Activated CD4-positive, alpha-beta T cell treated with anti-CD3 and anti-CD28 coated beads, Interleukin-2, amount 10 ng/mL, durations not matched to agents 7 days and 5 days (primary cell): ENCODE measurements at regions of chr20 and their contacts with region 1.

Region 1: GRCh38 chr20:44115762-44116644 is 71.0 kb downstream of the JPH2 start:
- DNase-seq: no peak
- H3K4me3 Mint-ChIP-seq: no peak overlapping the region
- H3K27ac Mint-ChIP-seq: no peak overlapping the region
- H3K4me1 Mint-ChIP-seq: peaks cover 9% of the 10 kb centered on the region
- H3K27me3 Mint-ChIP-seq: peaks cover 24% of the 10 kb centered on the region

Region 2: GRCh38 chr20:43878776-43879175 is 237.2 kb before region 1 on chr20:
- CTCF ChIA-PET with region 1: no interaction called
- POLR2A ChIA-PET with region 1: no interaction called
- DNase-seq: no peak
- H3K4me3 Mint-ChIP-seq: no peak overlapping the region
- H3K27ac Mint-ChIP-seq: no peak overlapping the region
- H3K4me1 Mint-ChIP-seq: peaks cover 1% of the 10 kb centered on the region
- H3K27me3 Mint-ChIP-seq: peaks cover 33% of the 10 kb centered on the region

Region 3: DNA sequence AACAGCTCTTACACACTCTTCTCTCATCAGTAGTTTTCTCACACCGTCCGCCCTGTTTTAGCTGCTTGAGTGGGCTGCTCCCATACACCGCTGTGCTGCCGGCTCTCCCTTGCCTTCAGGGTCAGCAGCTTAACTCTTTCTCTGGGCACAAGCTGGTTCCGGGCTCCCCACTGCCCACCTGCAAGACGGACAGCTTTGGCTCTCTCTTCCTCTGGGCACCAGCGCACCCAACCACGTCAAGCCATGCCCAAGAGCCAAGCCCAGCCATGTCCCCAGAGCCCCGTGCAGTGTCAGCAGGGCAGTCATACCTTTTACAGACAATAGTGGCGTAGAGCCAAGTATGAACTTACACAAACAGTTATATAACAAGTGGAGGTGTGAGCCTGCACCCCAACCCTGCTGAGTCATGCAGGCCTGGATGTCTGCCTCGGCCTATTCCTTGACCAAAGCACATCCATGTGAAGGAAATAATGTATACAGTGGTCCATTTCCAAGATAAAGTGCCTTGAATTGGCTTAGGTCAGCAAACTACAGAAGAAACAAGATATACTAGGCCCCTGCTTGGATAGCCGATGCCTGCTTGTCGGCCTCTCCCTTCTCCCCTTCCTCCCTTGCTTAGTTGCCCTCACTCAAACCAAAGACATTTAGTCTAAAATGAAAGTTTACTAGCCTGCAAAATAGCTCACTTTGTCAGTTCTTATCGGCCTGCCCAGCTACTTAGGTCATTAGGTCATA is 18.3 kb before region 1 on chr20:
- CTCF ChIA-PET with region 1: no interaction called
- POLR2A ChIA-PET with region 1: no interaction called
- DNase-seq: no peak
- H3K4me3 Mint-ChIP-seq: no peak overlapping the region
- H3K27ac Mint-ChIP-seq: no peak overlapping the region
- H3K4me1 Mint-ChIP-seq: peaks cover 3% of the 10 kb centered on the region
- H3K27me3 Mint-ChIP-seq: peaks cover 29% of the 10 kb centered on the region

Region 4: DNA sequence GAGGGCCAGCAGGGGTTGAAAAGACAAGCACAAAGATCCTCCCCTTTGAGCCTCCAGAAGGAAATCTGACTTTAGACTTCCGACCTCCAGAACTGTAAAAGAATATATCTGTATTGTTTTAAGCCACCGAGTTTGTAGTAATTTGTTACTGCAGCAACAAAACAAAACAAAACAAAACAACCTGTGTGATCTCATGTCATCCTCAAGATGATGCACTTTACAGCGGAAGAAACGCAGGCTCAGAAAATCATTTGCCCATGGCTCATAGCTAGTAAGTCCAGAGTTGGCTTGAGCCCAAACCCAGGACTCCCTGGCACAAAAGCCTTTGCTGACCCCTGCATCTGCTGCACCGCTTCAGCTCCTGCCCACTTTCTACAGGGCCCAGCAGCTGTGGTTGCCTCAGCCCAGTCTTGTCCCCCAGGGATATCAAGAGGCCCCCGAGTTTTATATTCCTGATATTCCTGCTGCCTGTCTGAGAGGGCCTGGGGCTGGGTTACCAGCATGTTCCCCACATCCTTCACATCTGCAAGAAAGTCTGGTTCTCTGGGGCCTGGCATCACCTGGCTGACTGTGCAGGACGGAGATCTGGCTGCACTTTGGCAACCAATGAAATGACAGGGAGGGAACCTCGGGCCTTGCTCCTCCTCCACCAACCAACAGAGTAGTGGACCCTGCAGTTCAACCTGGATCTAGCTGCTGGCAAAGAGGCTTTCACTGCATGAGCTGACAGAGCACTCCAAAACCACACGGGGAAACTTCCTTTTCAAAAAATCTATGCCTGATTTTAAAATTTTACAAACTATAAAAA is 14.1 kb after region 1 on chr20:
- CTCF ChIA-PET with region 1: interaction called, 12 read pairs
- POLR2A ChIA-PET with region 1: no interaction called
- DNase-seq: no peak
- H3K4me3 Mint-ChIP-seq: no peak overlapping the region
- H3K27ac Mint-ChIP-seq: no peak overlapping the region
- H3K4me1 Mint-ChIP-seq: no peaks in the 10 kb centered on the region
- H3K27me3 Mint-ChIP-seq: peaks cover 8% of the 10 kb centered on the region

Region 5: GRCh38 chr20:44187051-44187762 is 71.2 kb after region 1 on chr20 and contains the start of gene JPH2:
- CTCF ChIA-PET with region 1: interaction called, 33 read pairs
- POLR2A ChIA-PET with region 1: no interaction called
- DNase-seq: no peak
- H3K4me3 Mint-ChIP-seq: no peak within 1 kb of the TSS
- H3K27ac Mint-ChIP-seq: no peak within 1 kb of the TSS
- H3K4me1 Mint-ChIP-seq: peaks cover 12% of the 10 kb centered on the region
- H3K27me3 Mint-ChIP-seq: peaks cover 42% of the 10 kb centered on the region
- total RNA-seq, gene JPH2: not detected